ENCODE measurements at regions of chr17 and their contacts with region 1.

Region 1: DNA sequence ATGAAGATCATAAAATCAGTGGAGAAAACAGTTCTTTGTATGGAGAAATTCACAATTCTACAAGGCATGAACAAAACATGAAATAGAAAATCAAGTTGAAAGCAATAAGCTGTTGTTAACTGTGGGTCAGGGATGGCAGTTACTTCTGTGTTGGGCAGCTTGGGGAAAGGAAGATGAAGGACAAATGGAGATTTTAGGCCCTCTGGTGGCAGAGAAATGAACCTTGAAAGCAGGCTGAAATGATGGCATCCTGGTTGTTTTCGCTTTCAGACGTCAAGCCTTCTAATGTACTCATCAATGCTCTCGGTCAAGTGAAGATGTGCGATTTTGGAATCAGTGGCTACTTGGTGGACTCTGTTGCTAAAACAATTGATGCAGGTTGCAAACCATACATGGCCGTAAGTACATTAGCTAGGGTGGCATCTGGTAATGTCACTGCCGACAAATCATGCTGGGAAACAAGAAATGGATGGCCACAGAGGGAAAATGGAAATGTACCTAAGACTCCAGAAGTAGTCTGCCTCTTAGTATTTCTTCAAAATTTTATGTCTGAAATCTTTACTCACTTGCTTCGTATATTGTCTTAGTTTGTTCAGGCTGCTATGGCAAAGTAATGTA is 108.9 kb downstream of the MAP2K6 start:
- DNase-seq: peak; percentile 45
- H3K4me3 Mint-ChIP-seq: no peak overlapping the region
- H3K27ac Mint-ChIP-seq: no peak overlapping the region
- H3K4me1 Mint-ChIP-seq: no peaks in the 10 kb centered on the region
- H3K27me3 Mint-ChIP-seq: no peaks in the 10 kb centered on the region
- CTCF ChIP-seq: peak; percentile 65

Region 2: DNA sequence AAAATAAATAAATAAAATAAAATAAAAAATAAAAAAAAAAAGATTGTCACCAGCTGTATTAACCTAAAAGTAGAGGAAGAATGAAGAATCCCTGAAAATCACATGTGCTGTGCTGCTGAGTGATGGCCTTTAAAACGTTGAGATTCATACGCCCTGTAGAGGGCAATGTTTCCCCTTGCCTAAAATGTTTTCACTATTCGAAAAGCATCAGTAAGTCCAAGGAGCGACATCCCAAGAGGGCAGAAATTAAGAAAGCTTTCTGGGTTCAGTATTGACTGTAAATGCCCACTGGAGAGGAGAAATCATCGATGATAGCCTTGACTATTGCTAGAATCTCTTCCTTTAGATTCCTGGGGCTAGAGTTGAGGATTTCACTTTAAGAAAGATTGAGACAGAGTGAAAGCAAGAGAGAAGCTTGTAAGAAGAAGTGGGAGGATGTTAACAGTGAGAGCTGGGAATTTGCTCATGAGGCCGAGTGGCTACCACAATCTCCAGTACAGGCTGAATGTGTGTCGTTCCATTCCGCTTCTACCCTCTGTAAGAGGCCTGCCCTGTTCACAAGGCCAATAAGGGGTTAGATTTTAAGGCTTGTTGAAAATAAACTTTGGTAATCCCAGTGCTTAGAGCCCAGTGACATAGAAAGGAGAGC is 751.4 kb before region 1 on chr17:
- CTCF ChIA-PET with region 1: no interaction called
- intact Hi-C with region 1: loop called (anchors 10 kb)
- DNase-seq: peak; percentile 21
- H3K4me3 Mint-ChIP-seq: no peak overlapping the region
- H3K27ac Mint-ChIP-seq: no peak overlapping the region
- H3K4me1 Mint-ChIP-seq: peaks cover 19% of the 10 kb centered on the region
- H3K27me3 Mint-ChIP-seq: no peaks in the 10 kb centered on the region
- CTCF ChIP-seq: peak; percentile 58

Region 3: GRCh38 chr17:69335058-69335457 is 188.3 kb before region 1 on chr17:
- CTCF ChIA-PET with region 1: interaction called, 10 read pairs
- intact Hi-C with region 1: loop called (anchors 1 kb)
- DNase-seq: no peak
- H3K4me3 Mint-ChIP-seq: no peak overlapping the region
- H3K27ac Mint-ChIP-seq: peak overlapping the region; percentile 10
- H3K4me1 Mint-ChIP-seq: no peaks in the 10 kb centered on the region
- H3K27me3 Mint-ChIP-seq: no peaks in the 10 kb centered on the region
- CTCF ChIP-seq: no peak

Region 4: GRCh38 chr17:69390795-69391501 is 132.4 kb before region 1 on chr17:
- CTCF ChIA-PET with region 1: interaction called, 3 read pairs
- intact Hi-C with region 1: loop called (anchors 5 kb)
- DNase-seq: no peak
- H3K4me3 Mint-ChIP-seq: peak overlapping the region; percentile 25
- H3K27ac Mint-ChIP-seq: no peak overlapping the region
- H3K4me1 Mint-ChIP-seq: peaks cover 10% of the 10 kb centered on the region
- H3K27me3 Mint-ChIP-seq: no peaks in the 10 kb centered on the region
- CTCF ChIP-seq: no peak

Region 5: GRCh38 chr17:70144260-70144846 is 621.0 kb after region 1 on chr17:
- CTCF ChIA-PET with region 1: no interaction called
- intact Hi-C with region 1: loop called (anchors 2 kb)
- DNase-seq: no peak
- H3K4me3 Mint-ChIP-seq: no peak overlapping the region
- H3K27ac Mint-ChIP-seq: no peak overlapping the region
- H3K4me1 Mint-ChIP-seq: no peaks in the 10 kb centered on the region
- H3K27me3 Mint-ChIP-seq: no peaks in the 10 kb centered on the region
- CTCF ChIP-seq: peak; percentile 39

Measured in Calu3 (cell line).